Caco-2 (cell line): ENCODE measurements at regions of chr7 and their contacts with region 1.

Region 1: DNA sequence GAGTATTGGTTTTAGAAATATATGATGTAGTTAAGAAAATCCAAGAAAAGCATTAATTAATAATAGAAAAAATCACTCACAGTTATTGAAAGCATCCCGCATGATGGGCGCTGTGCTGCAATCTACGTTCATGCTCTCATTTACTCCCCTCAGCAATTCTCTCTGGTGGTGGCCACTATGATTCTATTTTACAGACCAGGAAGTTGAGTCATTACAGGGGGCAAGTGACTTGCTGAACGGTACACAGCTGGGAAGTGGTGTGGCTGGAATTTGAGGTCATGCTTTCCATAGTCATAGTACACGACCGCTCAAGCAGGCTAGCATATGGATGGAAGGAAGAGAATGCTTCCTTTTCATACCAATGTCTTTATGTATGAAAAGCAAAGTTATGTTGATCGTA is 117.4 kb downstream of the TES start:
- DNase-seq: no peak
- H3K4me3 ChIP-seq: no peak overlapping the region
- H3K4me3 Mint-ChIP-seq: no peak overlapping the region
- H3K27ac Mint-ChIP-seq: no peak overlapping the region
- H3K4me1 ChIP-seq: no peaks in the 10 kb centered on the region
- H3K4me1 Mint-ChIP-seq: peaks cover 8% of the 10 kb centered on the region
- H3K27me3 ChIP-seq: no peaks in the 10 kb centered on the region
- H3K27me3 Mint-ChIP-seq: no peaks in the 10 kb centered on the region
- CTCF ChIP-seq: no peak

Region 2: GRCh38 chr7:114856625-114857024 is 1471.1 kb before region 1 on chr7:
- CTCF ChIA-PET with region 1: no interaction called
- POLR2A ChIA-PET with region 1: no interaction called
- intact Hi-C with region 1: loop called (anchors 5 kb)
- DNase-seq: peak in 1 of 2 experiments; percentile 5
- H3K4me3 ChIP-seq: no peak overlapping the region
- H3K4me3 Mint-ChIP-seq: no peak overlapping the region
- H3K27ac Mint-ChIP-seq: no peak overlapping the region
- H3K4me1 ChIP-seq: peaks cover 24% of the 10 kb centered on the region
- H3K4me1 Mint-ChIP-seq: peaks cover 4% of the 10 kb centered on the region
- H3K27me3 ChIP-seq: no peaks in the 10 kb centered on the region
- H3K27me3 Mint-ChIP-seq: no peaks in the 10 kb centered on the region
- CTCF ChIP-seq: no peak

Region 3: DNA sequence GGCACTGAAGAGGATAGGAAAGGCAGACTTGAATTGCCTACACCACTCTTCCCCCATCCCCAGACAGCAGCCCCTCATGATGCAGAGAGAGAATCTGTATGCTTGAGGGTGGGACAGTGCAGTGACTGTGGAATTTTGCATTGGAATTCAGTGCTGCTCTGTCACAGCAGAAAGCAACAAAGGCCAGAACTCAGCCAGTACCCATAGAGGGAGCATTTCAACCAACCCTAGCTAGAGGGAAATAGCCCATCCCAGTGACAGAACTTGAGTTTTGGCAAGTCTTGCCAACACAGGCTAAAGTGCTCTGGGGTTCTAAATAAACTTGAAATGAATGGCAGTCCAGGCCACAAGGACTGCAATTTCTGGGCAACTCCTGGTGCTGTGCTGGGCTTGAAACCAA is 37.0 kb before region 1 on chr7:
- CTCF ChIA-PET with region 1: no interaction called
- POLR2A ChIA-PET with region 1: no interaction called
- intact Hi-C with region 1: loop called (anchors 5 kb)
- DNase-seq: peak in 1 of 2 experiments; percentile 9
- H3K4me3 ChIP-seq: no peak overlapping the region
- H3K4me3 Mint-ChIP-seq: no peak overlapping the region
- H3K27ac Mint-ChIP-seq: no peak overlapping the region
- H3K4me1 ChIP-seq: no peaks in the 10 kb centered on the region
- H3K4me1 Mint-ChIP-seq: peaks cover 9% of the 10 kb centered on the region
- H3K27me3 ChIP-seq: no peaks in the 10 kb centered on the region
- H3K27me3 Mint-ChIP-seq: no peaks in the 10 kb centered on the region
- CTCF ChIP-seq: peak in 1 of 2 experiments; percentile 19